OCI-LY7 (cell line): ENCODE measurements at regions of chr5 and their contacts with region 1.

Region 1: DNA sequence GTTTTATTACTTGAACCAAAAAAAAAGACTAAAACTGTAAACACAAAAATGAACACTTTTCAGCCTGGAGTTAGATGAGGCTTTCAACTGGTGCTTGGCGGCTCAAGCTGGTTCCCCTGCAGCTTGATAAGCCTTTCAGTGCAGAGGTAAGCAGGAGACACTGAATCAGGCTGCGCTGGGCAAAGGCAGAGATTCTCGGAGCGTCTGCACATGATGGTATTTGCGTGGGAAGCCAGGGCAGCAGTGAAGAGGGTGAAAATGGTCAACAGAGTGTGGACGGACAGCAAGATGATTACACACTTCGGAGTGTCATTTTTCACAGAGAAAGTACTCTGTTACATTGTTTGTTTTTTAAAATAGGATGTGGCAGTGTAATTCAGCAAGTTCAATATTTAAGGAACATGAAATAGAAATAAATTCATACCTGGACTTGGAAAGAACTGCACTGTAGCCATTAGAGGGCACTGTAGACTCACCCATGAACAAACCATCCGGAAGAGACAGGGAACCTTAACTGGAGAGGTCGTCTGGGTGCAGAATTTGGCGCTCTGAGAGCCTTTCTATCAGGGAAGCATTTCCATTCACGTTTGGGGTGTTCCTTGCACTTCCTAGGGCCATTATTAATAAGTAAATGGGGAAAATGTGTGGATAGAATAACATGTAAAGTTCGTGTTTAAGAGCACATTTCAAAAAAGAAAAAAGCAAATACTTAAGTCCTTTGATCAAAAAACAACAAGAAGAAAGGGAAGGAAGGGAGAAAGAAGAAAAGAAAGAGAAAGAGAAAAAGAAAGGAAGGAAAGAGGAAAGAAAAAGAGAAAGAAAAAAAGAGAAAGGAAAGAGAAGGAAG is 69.8 kb downstream of the ICE1 start:
- DNase-seq: peak; percentile 75
- H3K4me3 ChIP-seq: no peak overlapping the region
- H3K27ac ChIP-seq: no peak overlapping the region
- H3K4me1 ChIP-seq: peaks cover 4% of the 10 kb centered on the region
- CTCF ChIP-seq: peak; percentile 90

Region 2: GRCh38 chr5:5551499-5551898 is 59.2 kb after region 1 on chr5:
- CTCF ChIA-PET with region 1: no interaction called
- POLR2A ChIA-PET with region 1: no interaction called
- intact Hi-C with region 1: no loop called
- DNase-seq: no peak
- H3K4me3 ChIP-seq: no peak overlapping the region
- H3K27ac ChIP-seq: no peak overlapping the region
- H3K4me1 ChIP-seq: no peaks in the 10 kb centered on the region
- CTCF ChIP-seq: no peak

Region 3: GRCh38 chr5:5881294-5881693 is 389.0 kb after region 1 on chr5:
- CTCF ChIA-PET with region 1: no interaction called
- POLR2A ChIA-PET with region 1: interaction called, 3 read pairs
- intact Hi-C with region 1: loop called (anchors 1 kb)
- DNase-seq: peak; percentile 29
- H3K4me3 ChIP-seq: no peak overlapping the region
- H3K27ac ChIP-seq: no peak overlapping the region
- H3K4me1 ChIP-seq: no peaks in the 10 kb centered on the region
- CTCF ChIP-seq: peak; percentile 65

Region 4: GRCh38 chr5:6291961-6292360 is 799.7 kb after region 1 on chr5:
- CTCF ChIA-PET with region 1: no interaction called
- POLR2A ChIA-PET with region 1: no interaction called
- intact Hi-C with region 1: loop called (anchors 10 kb)
- DNase-seq: peak; percentile 28
- H3K4me3 ChIP-seq: no peak overlapping the region
- H3K27ac ChIP-seq: no peak overlapping the region
- H3K4me1 ChIP-seq: no peaks in the 10 kb centered on the region
- CTCF ChIP-seq: peak; percentile 55

Region 5: GRCh38 chr5:6328173-6328572 is 835.9 kb after region 1 on chr5:
- CTCF ChIA-PET with region 1: no interaction called
- POLR2A ChIA-PET with region 1: no interaction called
- intact Hi-C with region 1: no loop called
- DNase-seq: peak; percentile 11
- H3K4me3 ChIP-seq: no peak overlapping the region
- H3K27ac ChIP-seq: no peak overlapping the region
- H3K4me1 ChIP-seq: no peaks in the 10 kb centered on the region
- CTCF ChIP-seq: no peak